GM13976 (cell line): ENCODE measurements at regions of chr17 and their contacts with region 1.

Region 1: DNA sequence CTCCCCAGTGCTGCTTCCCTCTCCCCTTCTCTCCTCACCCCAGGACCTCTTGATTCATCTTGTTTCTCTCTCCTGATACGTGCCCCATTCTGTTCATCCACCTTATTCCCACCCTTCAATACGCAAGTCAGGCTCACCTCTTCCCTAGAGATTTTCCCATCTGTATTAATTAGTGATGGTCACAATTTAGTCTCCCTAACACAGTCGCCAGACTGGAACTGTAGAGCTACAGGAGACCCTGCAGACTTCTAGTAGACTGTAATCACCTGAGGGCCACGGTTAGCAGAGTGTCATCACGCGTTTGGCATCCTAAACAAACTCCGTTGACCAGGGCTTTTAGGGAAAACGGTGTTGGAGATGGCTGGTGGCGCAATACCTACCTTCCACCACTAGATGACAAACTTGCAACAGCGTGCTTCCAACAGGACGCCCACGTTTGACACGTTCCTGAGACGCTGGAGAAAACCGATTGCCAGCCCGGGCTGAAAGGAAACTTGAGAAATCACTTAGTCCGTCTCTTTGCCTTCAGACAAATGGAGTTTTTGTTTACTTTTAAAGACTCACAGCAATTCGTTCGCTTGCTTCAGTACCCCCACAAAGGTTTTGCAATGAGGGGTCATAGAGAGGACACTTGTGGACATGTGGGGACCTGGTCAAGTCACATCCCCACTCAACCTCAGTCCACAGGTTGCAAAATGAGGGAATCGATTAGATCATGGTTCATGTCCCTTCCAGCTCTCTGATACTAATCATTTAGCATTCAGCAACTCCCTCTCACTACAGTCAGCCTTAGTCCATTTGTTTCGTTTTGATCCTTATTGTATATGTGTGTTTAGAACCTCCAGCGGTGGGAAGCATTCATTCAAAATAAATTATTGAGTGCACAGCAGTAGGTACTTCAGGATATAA is 20.6 kb downstream of the MYL4 start:
- DNase-seq: peak; percentile 79
- CTCF ChIP-seq: peak; percentile 95

Region 2: GRCh38 chr17:47119746-47120520 is 109.9 kb before region 1 on chr17:
- in situ Hi-C with region 1: no loop called
- DNase-seq: no peak
- CTCF ChIP-seq: no peak

Region 3: DNA sequence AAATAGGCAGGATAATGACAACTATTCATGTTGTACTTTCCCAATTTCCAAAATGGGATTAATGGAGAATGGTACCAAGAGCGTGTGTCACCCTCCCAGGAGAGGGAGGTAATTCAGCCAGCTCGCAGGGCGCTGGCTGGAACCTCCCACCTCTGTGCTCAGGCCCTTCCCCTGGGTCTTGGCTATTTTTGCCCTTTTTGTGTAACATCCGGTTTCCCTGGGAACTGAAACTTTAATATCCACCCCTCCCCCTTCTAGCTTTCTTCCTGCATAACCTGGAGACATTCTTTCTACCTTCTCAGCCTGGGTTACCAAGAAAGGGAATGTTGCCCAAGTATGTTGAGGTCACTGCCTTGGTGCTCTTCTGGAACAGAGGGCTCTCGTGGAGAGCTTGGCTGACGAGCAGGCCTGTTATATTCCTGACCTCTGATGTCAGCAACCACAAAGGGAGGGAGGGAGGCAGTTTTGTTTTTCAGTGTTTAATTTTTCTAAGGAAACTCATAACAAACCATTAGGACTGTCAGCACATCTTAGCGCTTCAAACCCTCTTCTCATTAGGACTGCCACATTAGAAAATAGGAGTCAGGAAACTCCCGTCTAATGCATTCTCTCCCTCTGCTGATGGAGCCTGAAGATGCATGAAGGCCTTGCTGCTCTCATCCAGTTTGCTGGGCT is 49.4 kb after region 1 on chr17:
- in situ Hi-C with region 1: no loop called
- DNase-seq: peak; percentile 83
- CTCF ChIP-seq: no peak

Region 4: GRCh38 chr17:47310186-47310970 is 80.6 kb after region 1 on chr17:
- in situ Hi-C with region 1: loop called (anchors 5 kb)
- DNase-seq: no peak
- CTCF ChIP-seq: no peak

Region 5: GRCh38 chr17:47615766-47616424 is 386.1 kb after region 1 on chr17:
- in situ Hi-C with region 1: loop called (anchors 10 kb)
- DNase-seq: peak; percentile 56
- CTCF ChIP-seq: peak; percentile 22